ENCODE measurements at regions of chr2 and their contacts with region 1.

Region 1: DNA sequence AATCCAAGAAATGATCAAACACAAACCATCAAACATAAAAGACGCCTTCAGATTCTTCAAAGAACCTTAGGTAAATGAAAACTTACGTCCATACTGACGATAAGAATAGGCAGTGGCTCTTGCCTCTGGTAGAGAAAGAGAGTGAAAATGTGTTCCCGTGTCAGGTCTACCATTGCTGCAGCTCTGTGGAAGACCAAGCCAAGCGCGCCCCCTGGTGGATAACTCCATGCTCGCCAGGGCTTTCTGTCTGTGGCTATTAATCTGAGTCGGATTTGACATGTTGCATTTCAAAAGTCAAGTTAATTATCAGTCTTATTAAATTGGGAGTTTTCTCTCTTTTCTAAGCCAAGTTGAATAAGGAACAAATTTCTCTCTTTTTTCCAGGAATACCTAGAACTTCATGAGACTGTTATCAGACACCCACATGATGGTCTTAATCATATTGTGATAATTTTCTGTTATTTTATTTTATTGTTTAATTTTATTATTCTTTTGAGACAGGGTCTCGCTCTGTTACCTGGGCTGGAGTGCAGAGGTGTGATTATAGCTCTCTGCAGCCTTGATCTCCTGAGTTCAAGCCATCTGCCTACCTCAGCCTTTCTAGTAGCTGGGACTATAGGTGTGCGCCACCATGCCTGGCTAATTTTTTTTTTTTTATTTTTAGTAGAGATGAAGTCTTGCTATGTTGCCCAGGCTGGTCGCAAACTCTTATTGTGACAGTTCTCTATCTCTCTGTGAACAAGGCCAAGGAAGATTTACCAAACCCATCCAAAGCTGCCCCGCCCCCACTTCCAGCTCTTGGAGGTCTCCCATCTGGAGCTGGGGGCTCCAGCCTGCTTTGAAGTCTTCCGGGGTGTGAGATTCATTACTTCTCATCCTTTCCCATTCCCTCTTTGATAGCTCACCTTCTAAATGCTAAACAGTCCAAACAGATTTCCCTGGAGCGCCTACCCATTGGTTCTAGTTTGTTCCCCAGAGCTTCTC is 15.8 kb upstream of the ZAP70 start:
- DNase-seq: peak; percentile 92
- ATAC-seq: peak; percentile 73
- H3K4me3 Mint-ChIP-seq: no peak overlapping the region
- H3K27ac Mint-ChIP-seq: no peak overlapping the region
- H3K4me1 Mint-ChIP-seq: peaks cover 20% of the 10 kb centered on the region
- H3K27me3 Mint-ChIP-seq: peaks cover 6% of the 10 kb centered on the region; the same call in 1 of the 2 replicates
- CTCF ChIP-seq: peak; percentile 92

Region 2: DNA sequence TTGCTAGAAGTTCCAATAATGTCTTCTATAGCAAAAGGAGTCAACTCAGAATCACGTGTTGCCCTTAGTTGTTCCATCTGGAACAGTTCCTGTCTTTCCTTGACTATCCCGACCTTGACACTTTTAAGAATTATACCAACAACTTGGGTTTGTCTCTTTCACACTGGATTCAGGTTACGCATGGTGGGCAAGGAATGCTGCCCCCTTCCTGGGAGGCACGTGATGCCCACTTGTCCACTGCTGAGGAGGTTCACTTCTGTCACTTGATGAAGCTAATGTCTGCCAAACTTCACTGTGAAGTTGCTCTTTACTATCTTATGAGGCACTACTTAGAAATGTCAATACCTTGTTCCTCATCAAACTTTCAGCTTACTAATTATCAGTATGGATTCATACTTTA is 46.4 kb before region 1 on chr2:
- CTCF ChIA-PET with region 1: interaction called, 12 read pairs
- POLR2A ChIA-PET with region 1: interaction called, 11 read pairs
- DNase-seq: no peak
- ATAC-seq: no peak
- H3K4me3 Mint-ChIP-seq: no peak overlapping the region
- H3K27ac Mint-ChIP-seq: no peak overlapping the region
- H3K4me1 Mint-ChIP-seq: peaks cover 5% of the 10 kb centered on the region
- H3K27me3 Mint-ChIP-seq: no peaks in the 10 kb centered on the region
- CTCF ChIP-seq: no peak

Region 3: GRCh38 chr2:97713296-97714083 is 15.9 kb after region 1 on chr2 and contains the start of gene ZAP70:
- CTCF ChIA-PET with region 1: interaction called, 124 read pairs
- POLR2A ChIA-PET with region 1: no interaction called
- DNase-seq: no peak
- ATAC-seq: no peak
- H3K4me3 Mint-ChIP-seq: no peak within 1 kb of the TSS
- H3K27ac Mint-ChIP-seq: peak within 1 kb of the TSS; percentile 36; the same call in 1 of the 2 replicates
- H3K4me1 Mint-ChIP-seq: peaks cover 12% of the 10 kb centered on the region
- H3K27me3 Mint-ChIP-seq: peaks cover 4% of the 10 kb centered on the region
- CTCF ChIP-seq: no peak
- total RNA-seq, gene ZAP70: 0.61 to 0.73 TPM (median 0.64 TPM) in 3 replicates

Region 4: DNA sequence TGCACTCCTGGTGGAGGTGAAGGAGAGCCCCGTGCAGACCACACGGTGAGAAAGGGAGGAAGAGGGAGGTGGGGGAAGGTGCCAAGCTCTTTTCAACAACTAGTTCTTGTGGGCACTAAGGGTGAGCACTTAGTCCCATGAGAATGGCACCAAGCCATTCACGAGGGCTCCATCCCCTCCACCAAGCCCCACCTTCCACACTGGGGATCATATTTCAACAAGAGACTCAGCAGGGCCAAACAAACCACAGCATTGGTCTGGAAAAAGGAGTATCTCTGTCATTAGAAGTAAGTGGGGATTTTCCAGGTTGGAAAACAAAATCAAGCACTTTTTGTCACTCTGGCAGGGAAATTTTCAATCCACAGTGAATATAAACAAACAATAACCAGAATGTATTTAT is 54.2 kb after region 1 on chr2:
- CTCF ChIA-PET with region 1: interaction called, 67 read pairs
- POLR2A ChIA-PET with region 1: no interaction called
- DNase-seq: no peak
- ATAC-seq: peak; percentile 37
- H3K4me3 Mint-ChIP-seq: no peak overlapping the region
- H3K27ac Mint-ChIP-seq: peak overlapping the region; percentile 67; the same call in 1 of the 2 replicates
- H3K4me1 Mint-ChIP-seq: peaks cover 34% of the 10 kb centered on the region
- H3K27me3 Mint-ChIP-seq: no peaks in the 10 kb centered on the region
- CTCF ChIP-seq: no peak

Region 5: DNA sequence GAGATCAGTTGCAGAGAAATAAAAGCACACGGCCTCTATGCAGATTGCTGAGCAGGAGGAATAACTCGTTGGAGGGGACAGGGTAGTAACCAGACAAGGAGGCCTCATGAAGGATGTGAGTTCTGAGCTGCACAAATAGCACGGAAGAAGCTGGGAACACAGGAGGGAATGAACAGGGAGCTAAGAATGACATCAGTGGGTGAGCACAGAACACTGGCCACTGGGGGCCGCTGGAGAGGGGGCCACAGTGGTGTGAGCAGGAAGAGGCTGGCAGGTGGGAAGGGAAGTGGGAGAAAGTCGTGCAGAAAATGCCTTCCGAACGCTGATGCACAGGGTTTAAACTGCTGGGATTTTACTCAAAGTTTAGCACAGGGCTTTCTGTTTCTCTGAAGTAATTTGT is 76.9 kb after region 1 on chr2:
- CTCF ChIA-PET with region 1: interaction called, 11 read pairs
- POLR2A ChIA-PET with region 1: no interaction called
- DNase-seq: peak; percentile 46
- ATAC-seq: peak; percentile 85
- H3K4me3 Mint-ChIP-seq: no peak overlapping the region
- H3K27ac Mint-ChIP-seq: no peak overlapping the region
- H3K4me1 Mint-ChIP-seq: peaks cover 20% of the 10 kb centered on the region
- H3K27me3 Mint-ChIP-seq: peaks cover 11% of the 10 kb centered on the region
- CTCF ChIP-seq: peak; percentile 37; the same call in 1 of the 2 replicates

Region 6: DNA sequence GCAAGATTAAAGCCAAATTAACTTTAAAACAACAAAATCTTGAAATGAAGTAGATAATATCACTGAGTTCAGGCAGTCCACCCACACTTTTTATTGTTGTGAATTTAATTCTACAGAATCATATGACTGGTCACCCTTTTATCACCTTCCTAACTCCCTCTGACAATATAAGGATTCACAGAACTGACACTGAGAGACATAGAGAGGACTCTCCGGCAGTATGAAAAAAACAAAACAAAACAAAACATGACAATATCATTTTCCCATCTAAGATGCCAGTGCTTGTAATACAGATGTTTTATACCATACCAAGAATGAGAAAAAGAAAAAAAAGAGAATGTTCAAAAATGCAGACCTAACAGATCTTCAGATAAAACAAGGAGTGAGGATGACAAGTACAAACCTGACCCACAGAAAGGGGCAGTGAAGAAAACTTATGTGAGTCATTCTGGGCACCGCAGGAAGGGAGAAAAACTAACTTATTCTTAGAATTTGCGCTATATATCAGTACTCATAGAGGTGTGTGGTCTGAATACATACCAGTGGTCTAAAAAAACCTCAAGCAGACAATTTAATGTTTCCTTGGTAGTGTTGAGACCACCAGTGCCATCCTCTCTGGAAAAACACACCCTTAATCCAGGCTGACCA is 152.5 kb after region 1 on chr2:
- CTCF ChIA-PET with region 1: no interaction called
- POLR2A ChIA-PET with region 1: no interaction called
- DNase-seq: no peak
- ATAC-seq: no peak
- H3K4me3 Mint-ChIP-seq: no peak overlapping the region
- H3K27ac Mint-ChIP-seq: no peak overlapping the region
- H3K4me1 Mint-ChIP-seq: peaks cover 10% of the 10 kb centered on the region
- H3K27me3 Mint-ChIP-seq: no peaks in the 10 kb centered on the region
- CTCF ChIP-seq: no peak